Activated CD8-positive, alpha-beta T cell treated with anti-CD3 and anti-CD28 coated beads, Interleukin-2, amount 10 ng/mL, durations not matched to agents 7 days and 5 days (primary cell): ENCODE measurements at regions of chr20 and their contacts with region 1.

Region 1: DNA sequence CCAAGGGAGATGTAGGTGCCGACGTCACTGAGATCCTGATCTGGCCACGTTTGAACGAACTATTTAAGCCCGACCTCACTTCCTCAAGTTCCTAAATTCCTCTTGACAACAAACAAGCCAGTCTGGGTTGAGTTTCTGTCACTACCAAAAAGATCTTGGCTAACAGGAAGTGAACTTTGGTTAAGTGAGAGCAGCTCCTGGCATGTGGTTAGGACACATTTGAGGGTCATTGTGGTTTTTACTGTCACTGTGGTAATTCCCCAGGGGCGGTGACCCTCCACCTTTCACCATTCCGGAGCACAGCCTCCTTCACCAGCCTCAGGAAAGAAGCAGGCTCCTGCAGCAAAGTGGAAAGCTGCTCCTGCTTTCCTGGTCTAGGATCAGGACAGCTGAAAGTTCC is 43.1 kb upstream of the ZNF831 start:
- DNase-seq: peak; percentile 53
- ATAC-seq: peak; percentile 40
- H3K4me3 Mint-ChIP-seq: peak overlapping the region; percentile 3
- H3K27ac Mint-ChIP-seq: peak overlapping the region; percentile 0
- H3K4me1 Mint-ChIP-seq: peaks cover 73% of the 10 kb centered on the region
- H3K27me3 Mint-ChIP-seq: peaks cover 4% of the 10 kb centered on the region

Region 2: DNA sequence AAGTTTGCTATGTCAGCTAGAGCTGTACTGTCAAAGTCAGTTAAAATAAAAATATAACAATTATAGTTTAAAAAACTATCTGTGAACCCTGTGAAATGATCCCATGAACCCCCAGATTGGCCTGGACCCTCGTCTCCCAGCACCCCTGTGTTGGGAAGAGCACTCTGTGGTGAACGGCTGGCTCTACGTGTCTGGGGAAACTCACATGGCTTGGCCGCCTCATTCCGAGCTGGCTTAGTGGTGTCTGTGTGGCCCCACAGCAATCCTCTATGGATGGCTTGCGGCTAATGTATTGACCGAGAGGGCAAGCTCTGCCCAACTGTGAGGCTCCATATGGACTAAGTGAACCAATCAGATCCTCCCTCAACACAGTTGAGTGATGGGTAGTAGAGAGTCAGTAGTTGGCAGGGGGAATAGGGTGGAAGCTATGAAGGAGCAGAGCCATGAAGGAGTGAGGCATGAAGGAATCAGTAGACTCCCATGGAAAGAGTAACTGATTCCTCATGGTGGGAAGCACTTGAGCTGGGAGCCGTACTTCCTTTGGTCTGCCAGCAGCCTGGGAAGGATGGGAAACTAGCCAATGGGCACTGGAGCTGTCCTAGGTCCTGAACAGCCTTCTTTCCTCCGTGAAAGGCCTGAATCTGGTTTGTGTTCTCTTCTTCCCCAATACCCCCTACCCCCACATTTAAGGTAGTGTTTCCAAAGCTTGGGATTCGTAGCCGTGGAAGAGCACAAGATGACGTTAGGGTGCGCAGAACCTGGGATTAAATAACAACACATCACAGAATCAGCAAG is 21.5 kb after region 1 on chr20:
- CTCF ChIA-PET with region 1: interaction called, 29 read pairs
- POLR2A ChIA-PET with region 1: interaction called, 20 read pairs
- DNase-seq: peak; percentile 40
- ATAC-seq: no peak
- H3K4me3 Mint-ChIP-seq: no peak overlapping the region
- H3K27ac Mint-ChIP-seq: no peak overlapping the region
- H3K4me1 Mint-ChIP-seq: peaks cover 50% of the 10 kb centered on the region
- H3K27me3 Mint-ChIP-seq: no peaks in the 10 kb centered on the region

Region 3: DNA sequence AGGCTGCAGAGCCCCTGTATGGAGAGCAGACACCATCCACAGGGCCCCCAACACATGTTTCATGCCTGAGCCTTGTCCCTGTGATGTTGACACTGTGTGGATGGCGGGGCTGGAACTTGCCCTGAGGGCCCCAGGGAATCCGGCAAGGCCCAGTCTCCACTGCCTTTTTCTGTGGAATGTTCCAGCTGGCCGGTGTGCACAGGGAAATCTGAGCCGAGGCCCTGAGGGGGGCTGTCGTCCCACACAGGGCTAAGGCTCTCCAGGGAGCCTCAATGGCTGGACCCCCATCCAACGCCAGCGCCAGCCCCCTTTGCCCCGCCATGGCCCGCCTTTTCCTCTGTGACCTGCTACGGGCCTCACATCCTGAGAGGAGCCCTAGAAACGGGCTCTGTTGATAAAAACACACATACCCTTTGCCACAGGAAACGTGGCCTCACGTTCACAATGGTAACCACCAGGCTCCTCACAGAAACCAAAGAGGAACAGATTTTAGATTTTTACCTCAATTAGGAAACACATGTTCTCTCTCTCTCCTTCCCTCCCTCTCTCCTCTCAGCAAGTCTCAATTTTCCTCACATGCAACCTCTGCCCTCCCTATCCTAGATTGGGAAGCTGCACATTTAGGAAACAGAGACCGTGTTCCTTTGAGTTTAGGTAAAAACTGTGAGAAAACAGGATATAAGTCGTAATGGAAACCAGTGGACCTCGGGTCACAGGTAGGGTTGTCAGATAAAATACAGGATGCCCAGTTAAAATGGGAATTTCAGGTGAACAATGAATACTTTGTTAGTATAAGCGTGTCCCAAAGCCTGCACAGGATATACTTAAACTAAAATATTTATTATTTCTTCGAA is 29.4 kb after region 1 on chr20:
- CTCF ChIA-PET with region 1: interaction called, 29 read pairs
- POLR2A ChIA-PET with region 1: interaction called, 20 read pairs
- DNase-seq: peak; percentile 91
- ATAC-seq: peak; percentile 82
- H3K4me3 Mint-ChIP-seq: peak overlapping the region; percentile 58
- H3K27ac Mint-ChIP-seq: peak overlapping the region; percentile 93
- H3K4me1 Mint-ChIP-seq: peaks cover 85% of the 10 kb centered on the region
- H3K27me3 Mint-ChIP-seq: peaks cover 3% of the 10 kb centered on the region

Region 4: DNA sequence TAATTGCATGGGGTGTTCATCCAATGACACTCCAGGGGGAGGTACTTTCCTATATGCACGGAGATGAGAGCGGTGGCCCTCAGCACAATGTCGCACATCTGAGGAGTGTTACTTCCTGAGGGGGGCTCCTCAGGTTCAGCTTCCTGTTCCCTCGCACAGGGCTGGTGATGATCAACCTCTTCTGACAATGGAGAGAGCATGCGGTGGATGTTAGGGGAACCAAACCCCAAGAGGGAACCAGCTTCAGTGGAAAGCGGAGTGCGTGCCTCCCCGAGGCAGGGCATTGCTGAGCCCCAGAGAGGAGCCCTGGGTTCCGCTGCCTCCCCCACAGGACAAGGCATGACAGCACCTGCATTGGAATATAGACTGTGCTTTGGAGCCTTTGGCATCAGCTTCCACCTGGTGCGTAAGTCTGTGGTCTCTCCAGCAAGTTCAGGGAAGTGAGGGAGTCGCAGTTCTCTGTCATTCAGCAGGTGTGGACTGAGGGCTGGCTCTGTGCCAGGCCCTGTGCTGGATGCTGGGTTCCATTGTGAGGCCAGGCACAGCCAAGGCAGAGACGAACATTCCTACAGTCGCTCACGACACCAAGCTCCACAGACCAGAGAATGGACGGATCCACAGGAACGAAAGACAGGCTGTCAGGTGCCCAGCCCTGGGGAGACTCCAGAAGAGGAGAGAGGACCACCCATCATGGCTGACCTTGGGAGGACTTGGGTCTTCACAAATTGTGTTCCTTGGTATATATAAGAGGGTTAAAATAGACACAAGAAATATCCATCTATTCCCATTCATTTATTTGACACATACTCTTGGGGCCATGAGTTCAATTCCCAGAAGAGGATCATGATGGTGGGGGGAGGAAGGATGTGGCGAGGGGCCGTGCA is 39.2 kb after region 1 on chr20:
- CTCF ChIA-PET with region 1: interaction called, 15 read pairs
- POLR2A ChIA-PET with region 1: interaction called, 23 read pairs
- DNase-seq: peak; percentile 82
- ATAC-seq: peak; percentile 74
- H3K4me3 Mint-ChIP-seq: peak overlapping the region; percentile 89
- H3K27ac Mint-ChIP-seq: peak overlapping the region; percentile 97
- H3K4me1 Mint-ChIP-seq: peaks cover 67% of the 10 kb centered on the region
- H3K27me3 Mint-ChIP-seq: no peaks in the 10 kb centered on the region

Region 5: DNA sequence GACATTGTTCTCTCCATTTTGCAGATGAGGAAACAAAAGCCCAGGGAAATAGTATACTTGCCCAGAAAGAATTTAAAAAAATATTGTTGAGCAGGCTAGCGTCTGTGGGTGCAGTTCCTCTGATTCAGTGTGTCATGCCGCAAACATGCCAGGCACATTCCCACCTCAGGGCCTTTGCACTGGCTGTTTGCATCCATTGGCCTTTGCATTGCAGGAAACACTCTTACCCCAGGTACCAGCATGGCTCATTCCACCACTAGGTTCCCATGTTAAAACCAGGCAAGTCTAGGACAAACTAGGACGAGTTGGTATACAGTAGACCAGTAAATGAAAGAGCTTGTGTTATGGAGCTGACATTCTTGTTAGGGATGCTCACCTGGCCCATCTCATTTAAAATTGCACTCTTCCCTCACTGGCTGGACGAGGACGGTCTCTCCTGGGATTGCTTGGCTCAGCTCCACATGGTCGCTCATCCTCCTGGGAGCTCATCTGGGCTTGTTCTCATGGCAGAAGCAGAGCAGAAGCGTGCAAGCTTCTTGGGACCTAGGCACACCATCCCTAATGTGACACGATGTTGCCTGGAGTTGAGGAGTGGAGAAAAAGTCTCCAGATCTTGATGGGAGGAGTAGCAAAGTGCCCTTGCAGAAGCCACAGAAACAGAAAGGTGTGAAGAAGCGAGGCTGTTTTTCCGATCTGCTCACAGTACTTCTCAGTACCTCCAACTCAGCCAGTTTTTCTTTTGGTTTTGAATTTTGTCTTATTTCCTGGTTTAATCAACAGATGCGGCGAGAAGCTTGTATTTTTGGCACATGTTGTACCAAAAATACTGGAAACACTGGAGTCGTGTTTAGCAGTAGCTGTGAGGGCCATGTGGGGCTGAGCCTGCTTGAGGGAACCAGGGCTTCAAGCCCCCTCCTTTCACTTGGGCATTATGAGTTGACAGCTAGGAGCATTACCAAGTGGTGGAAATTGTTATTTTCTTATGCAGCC is 57.1 kb after region 1 on chr20:
- CTCF ChIA-PET with region 1: interaction called, 12 read pairs
- POLR2A ChIA-PET with region 1: interaction called, 4 read pairs
- DNase-seq: peak; percentile 63
- ATAC-seq: peak; percentile 90
- H3K4me3 Mint-ChIP-seq: peak overlapping the region; percentile 48
- H3K27ac Mint-ChIP-seq: peak overlapping the region; percentile 86
- H3K4me1 Mint-ChIP-seq: peaks cover 73% of the 10 kb centered on the region
- H3K27me3 Mint-ChIP-seq: no peaks in the 10 kb centered on the region